Heart right ventricle (tissue), 16 donors: ENCODE measurements at regions of chr1 and their contacts with region 1.

Region 1: GRCh38 chr1:200488375-200489165 is 78.7 kb upstream of the ZNF281 start:
- DNase-seq: peak in 1 of 2 donors; percentile 43
- ATAC-seq: peak in 6 of 8 donors; percentile 38 to 65 (median 54)
- H3K4me3 ChIP-seq: no peak overlapping the region
- H3K27ac ChIP-seq: no peak overlapping the region
- H3K4me1 ChIP-seq: peaks cover 0 to 11% (median 0%) of the 10 kb centered on the region in 9 donors
- H3K27me3 ChIP-seq: peaks cover 0 to 26% (median 8%) of the 10 kb centered on the region in 7 donors
- CTCF ChIP-seq: peak; percentile 56 to 81 (median 78)

Region 2: GRCh38 chr1:199684686-199685273 is 803.8 kb before region 1 on chr1:
- intact Hi-C with region 1: loop called (anchors 1 to 10 kb)
- DNase-seq: peak in 1 of 2 donors; percentile 23
- ATAC-seq: peak in 6 of 8 donors; percentile 59 to 74 (median 64)
- H3K4me3 ChIP-seq: no peak overlapping the region
- H3K27ac ChIP-seq: no peak overlapping the region
- H3K4me1 ChIP-seq: no peaks in the 10 kb centered on the region
- H3K27me3 ChIP-seq: peaks cover 0 to 9% (median 0%) of the 10 kb centered on the region in 7 donors
- CTCF ChIP-seq: peak; percentile 54 to 90 (median 79)

Region 3: GRCh38 chr1:200139661-200140250 is 348.8 kb before region 1 on chr1:
- intact Hi-C with region 1: loop called in 1 of 10 experiments (anchors 10 kb)
- DNase-seq: peak in 1 of 2 donors; percentile 4
- ATAC-seq: peak in 1 of 8 donors; percentile 55
- H3K4me3 ChIP-seq: no peak overlapping the region
- H3K27ac ChIP-seq: no peak overlapping the region
- H3K4me1 ChIP-seq: peaks cover 0 to 10% (median 0%) of the 10 kb centered on the region in 9 donors
- H3K27me3 ChIP-seq: no peaks in the 10 kb centered on the region
- CTCF ChIP-seq: peak in 7 of 9 donors; percentile 40 to 70 (median 53)

Region 4: GRCh38 chr1:200302192-200302920 is 186.2 kb before region 1 on chr1:
- intact Hi-C with region 1: loop called in 3 of 10 experiments (anchors 5 to 10 kb)
- DNase-seq: peak; percentile 11 to 13
- ATAC-seq: peak; percentile 66 to 87 (median 74)
- H3K4me3 ChIP-seq: peak overlapping the region; percentile 40 to 83 (median 73)
- H3K27ac ChIP-seq: peak overlapping the region in 5 of 10 donors; percentile 1 to 64 (median 43)
- H3K4me1 ChIP-seq: peaks cover 0 to 19% (median 6%) of the 10 kb centered on the region in 9 donors
- H3K27me3 ChIP-seq: peaks cover 0 to 17% (median 6%) of the 10 kb centered on the region in 7 donors
- CTCF ChIP-seq: peak in 3 of 9 donors; percentile 23 to 29 (median 28)

Region 5: GRCh38 chr1:200428482-200429205 is 59.9 kb before region 1 on chr1:
- intact Hi-C with region 1: loop called in 1 of 10 experiments (anchors 10 kb)
- DNase-seq: no peak
- ATAC-seq: no peak
- H3K4me3 ChIP-seq: no peak overlapping the region
- H3K27ac ChIP-seq: no peak overlapping the region
- H3K4me1 ChIP-seq: peaks cover 0 to 7% (median 0%) of the 10 kb centered on the region in 9 donors
- H3K27me3 ChIP-seq: no peaks in the 10 kb centered on the region
- CTCF ChIP-seq: no peak

Region 6: DNA sequence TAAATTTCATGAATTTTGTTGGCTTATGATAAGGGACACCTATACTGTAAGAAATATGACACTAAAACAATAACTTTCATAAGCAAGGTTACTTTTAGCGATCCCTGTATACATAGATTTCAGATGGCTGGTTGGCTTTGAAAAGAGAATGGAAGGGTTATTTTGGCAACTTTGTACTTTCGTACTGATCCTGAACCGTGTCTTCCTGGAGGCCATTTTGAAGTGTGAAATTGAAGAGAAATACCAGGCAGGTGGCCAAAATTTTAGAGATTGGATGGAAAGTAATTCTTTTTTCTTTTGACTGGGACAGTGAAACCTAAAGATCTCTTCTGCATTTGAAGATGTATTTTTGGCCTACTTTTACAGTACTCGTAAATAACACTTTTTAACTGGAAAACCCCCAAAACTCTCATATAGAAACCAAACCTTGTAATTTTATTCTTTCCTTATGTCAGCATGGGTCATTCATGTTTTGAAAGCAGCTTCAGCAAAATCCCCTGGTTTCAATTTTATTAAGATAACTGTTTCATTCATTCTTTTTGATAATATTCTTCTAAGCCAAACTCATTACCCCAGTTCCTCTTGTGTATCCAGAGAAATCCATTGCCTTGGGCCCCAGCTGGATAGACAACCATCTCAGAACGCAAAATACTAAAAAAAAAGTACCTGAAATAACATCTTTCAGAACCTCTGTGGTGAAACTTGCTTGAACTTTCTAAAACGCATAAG is 40.4 kb before region 1 on chr1:
- intact Hi-C with region 1: no loop called
- DNase-seq: no peak
- ATAC-seq: no peak
- H3K4me3 ChIP-seq: no peak overlapping the region
- H3K27ac ChIP-seq: no peak overlapping the region
- H3K4me1 ChIP-seq: no peaks in the 10 kb centered on the region
- H3K27me3 ChIP-seq: peaks cover 0 to 5% (median 0%) of the 10 kb centered on the region in 7 donors
- CTCF ChIP-seq: no peak